Activated T-helper 1 cell treated with anti-CD3 and anti-CD28 coated beads, Interleukin-12 subunit alpha, Interleukin-12 subunit beta, Interleukin-2, Interleukin-4 antibody, amounts not matched to agents 30 ng/mL and 10 ng/mL and 1 ng/mL, durations not matched to agents 14 hours and 24 hours and 36 hours (primary cell): ENCODE measurements at regions of chr3 and their contacts with region 1.

Region 1: GRCh38 chr3:67329358-67329757 is 325.1 kb downstream of the SUCLG2 start:
- DNase-seq: no peak
- H3K4me3 Mint-ChIP-seq: no peak overlapping the region
- H3K27ac Mint-ChIP-seq: no peak overlapping the region
- H3K4me1 Mint-ChIP-seq: peaks cover 2% of the 10 kb centered on the region
- H3K27me3 Mint-ChIP-seq: peaks cover 2% of the 10 kb centered on the region

Region 2: DNA sequence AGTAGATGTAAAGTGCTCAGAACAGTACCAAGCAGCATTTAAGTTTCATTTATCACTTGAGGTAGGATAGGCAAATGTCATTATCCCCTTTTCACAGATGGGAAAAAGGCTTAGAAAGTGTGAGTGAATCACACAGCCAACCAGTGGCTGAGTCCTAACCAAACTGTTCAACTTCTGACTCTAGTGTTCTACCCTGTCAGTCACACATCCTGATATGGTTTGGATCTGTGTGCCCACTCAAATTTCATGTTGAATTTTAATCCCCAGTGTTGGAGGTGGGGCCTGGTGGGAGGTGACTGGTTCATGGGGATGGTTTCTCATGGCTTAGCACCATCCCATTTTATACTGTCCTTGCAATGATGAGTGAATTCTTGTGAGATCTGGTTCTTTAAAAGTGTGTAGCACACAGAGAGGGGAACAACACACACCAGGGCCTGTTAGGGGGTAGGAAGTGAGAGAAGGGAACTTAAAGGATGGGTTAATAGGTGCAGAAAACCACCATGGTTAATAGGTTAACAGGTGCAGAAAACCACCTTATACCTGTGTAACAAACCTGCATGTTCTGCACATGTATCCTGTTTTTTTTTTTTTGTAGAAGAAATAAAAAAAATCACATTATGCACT is 20.3 kb after region 1 on chr3:
- intact Hi-C with region 1: loop called (anchors 1 kb)
- DNase-seq: no peak
- H3K4me3 Mint-ChIP-seq: no peak overlapping the region
- H3K27ac Mint-ChIP-seq: peak overlapping the region; percentile 3
- H3K4me1 Mint-ChIP-seq: peaks cover 14% of the 10 kb centered on the region
- H3K27me3 Mint-ChIP-seq: peaks cover 3% of the 10 kb centered on the region

Region 3: DNA sequence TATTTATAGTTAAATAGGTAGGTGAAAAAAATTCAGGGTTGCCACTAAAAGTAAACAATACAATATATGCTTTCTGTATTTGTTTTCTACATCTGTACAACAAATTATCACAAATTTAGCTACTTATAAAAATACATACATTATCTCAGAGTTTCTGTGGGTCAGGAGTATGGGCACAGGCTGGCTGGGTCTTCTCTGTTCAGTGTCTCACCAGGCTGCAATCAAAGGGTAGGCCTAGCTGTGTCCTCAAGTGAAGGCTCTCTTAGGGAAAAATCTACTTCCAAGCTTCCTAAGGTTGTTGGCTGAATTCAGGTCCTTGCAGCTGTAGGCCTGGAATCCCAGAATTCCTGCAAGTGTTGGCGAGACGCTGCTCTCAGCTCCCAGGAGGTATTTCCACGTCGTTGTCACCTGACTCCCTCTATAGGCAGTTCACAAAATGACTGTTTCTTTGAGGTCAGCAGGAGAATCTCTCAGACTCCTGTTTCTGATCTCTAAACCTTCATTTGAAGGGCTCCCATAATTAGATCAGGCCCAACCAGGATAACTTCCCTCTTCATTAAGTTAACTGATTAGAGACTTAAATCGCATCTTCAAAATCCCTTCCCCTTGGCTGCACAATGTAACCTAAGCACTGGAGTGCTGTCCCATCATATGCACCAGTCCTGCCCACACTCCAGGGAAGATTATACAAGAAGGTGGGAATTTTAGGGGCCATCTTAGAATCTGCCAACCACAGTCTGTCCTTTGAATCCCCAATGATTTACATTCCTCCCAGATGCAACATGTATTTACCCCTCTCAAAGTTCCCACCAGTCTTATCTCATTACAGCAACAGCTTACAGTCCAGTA is 28.5 kb after region 1 on chr3:
- intact Hi-C with region 1: loop called (anchors 5 kb)
- DNase-seq: no peak
- H3K4me3 Mint-ChIP-seq: no peak overlapping the region
- H3K27ac Mint-ChIP-seq: no peak overlapping the region
- H3K4me1 Mint-ChIP-seq: peaks cover 20% of the 10 kb centered on the region
- H3K27me3 Mint-ChIP-seq: no peaks in the 10 kb centered on the region